Left cardiac atrium (tissue), 4 donors: ENCODE measurements at regions of chr5 and their contacts with region 1.

Region 1: GRCh38 chr5:96601811-96602244 is 60.3 kb upstream of the CAST start:
- DNase-seq: no peak
- ATAC-seq: peak; percentile 83 to 87

Region 2: DNA sequence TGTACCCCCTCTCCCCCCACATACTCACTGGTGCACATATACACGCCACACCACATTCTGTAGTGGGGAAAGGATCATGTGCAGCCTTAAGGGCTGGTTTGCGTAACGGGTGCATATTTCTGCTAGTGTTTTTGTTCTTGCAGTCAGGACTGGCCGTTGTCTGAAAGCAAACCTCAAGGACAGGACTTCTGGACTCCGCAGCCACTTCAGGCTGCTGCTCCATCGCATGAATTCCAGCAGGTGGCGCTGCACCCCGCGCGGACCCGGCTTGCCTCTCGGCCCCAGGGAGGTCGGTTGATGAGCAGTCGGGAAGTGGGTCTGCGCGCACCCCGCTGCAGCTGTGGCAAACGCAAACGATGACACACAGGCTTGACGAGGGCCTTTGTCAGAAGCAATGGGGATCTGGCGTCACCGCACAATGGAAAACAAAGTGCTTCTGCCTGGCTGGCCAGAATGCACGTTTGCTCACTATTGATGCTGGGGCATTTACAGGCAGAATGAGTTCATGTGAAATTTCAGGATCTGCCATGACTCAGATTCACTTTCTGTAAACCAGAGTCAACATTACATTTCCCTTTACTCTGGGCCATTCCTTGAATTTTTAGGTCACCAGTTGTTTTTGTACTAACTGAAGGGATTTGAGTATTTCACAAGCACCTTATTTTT is 743.0 kb before region 1 on chr5:
- intact Hi-C with region 1: loop called in 1 of 2 experiments (anchors 10 kb)
- DNase-seq: peak; percentile 92
- ATAC-seq: peak; percentile 75 to 80

Region 3: DNA sequence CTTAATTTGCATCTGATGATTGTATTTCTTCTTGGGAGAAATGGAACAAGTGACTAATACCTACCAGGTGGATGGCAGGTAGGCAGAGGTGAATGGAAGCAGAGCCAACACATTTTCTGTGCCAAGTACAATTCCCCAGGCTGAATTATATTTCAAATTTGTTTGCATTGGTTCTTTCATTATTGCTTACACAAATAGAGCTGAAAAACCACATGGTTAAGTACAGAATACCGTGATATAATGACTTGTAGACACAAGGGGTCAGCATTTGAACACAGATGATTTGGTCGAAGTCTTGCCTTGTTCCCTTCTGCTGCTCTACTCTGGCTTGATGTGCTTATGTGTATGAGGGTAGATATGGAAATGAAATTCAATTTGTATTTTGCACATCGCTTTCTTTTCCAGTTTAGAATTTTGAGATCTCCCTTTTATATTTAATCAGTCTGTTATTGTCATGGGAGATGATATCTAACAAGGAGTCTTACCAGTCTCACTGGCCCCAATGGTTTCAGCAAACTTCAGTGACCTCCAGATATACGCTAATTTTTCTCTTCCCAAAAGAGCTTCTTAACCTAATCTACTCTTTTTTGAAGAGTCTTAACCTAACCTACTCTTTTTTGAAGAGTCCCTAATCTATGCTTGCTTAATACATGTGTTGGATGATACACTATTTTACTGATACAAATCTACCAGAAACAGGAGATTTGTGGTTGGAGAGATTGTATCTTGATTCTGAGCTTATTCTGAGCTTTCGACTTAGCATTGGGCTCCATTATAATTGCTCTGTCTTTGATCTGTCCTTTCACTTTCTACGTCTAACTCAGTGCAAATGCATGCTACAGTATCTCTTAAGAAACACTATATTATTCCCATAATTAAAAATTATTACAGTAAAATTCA is 256.9 kb before region 1 on chr5:
- intact Hi-C with region 1: loop called (anchors 2 to 5 kb)
- DNase-seq: no peak
- ATAC-seq: peak; percentile 89 to 92